HCT116 (cell line): ENCODE measurements at regions of chr16 and their contacts with region 1.

Region 1: GRCh38 chr16:58096249-58096648 is 32.9 kb downstream of the CFAP20 start:
- DNase-seq: no peak
- ATAC-seq: no peak
- H3K4me3 ChIP-seq: no peak overlapping the region
- H3K27ac ChIP-seq: no peak overlapping the region
- H3K4me1 ChIP-seq: peaks cover 0 to 16% of the 10 kb centered on the region in 2 experiments; a peak in 2 of 4 replicates
- H3K27me3 ChIP-seq: no peaks in the 10 kb centered on the region
- CTCF ChIP-seq: no peak
- POLR2A ChIP-seq: no peak
- RAD21 ChIP-seq: no peak

Region 2: GRCh38 chr16:58110571-58111301 is 14.5 kb after region 1 on chr16:
- CTCF ChIA-PET with region 1: interaction called, 15 read pairs
- POLR2A ChIA-PET with region 1: no interaction called
- RAD21 ChIA-PET with region 1: no interaction called
- intact Hi-C with region 1: no loop called
- DNase-seq: no peak
- ATAC-seq: peak; percentile 33
- H3K4me3 ChIP-seq: no peak overlapping the region
- H3K27ac ChIP-seq: no peak overlapping the region
- H3K4me1 ChIP-seq: no peaks in the 10 kb centered on the region
- H3K27me3 ChIP-seq: no peaks in the 10 kb centered on the region
- CTCF ChIP-seq: no peak
- POLR2A ChIP-seq: no peak
- RAD21 ChIP-seq: no peak